Endothelial cell of umbilical vein (primary cell): ENCODE measurements at regions of chr6 and their contacts with region 1.

Region 1: GRCh38 chr6:31158140-31158862 is at the start of gene TCF19:
- DNase-seq: peak; percentile 100
- H3K4me3 ChIP-seq: peak within 1 kb of the TSS; percentile 72 to 90 (median 90)
- H3K27ac ChIP-seq: peak within 1 kb of the TSS; percentile 30
- H3K4me1 ChIP-seq: peaks cover 12% of the 10 kb centered on the region
- H3K27me3 ChIP-seq: no peaks in the 10 kb centered on the region
- CTCF ChIP-seq: no peak
- POLR2A ChIP-seq: peak; percentile 3
- total RNA-seq, gene TCF19: 28.0 and 31.7 TPM in 2 replicates

Region 2: GRCh38 chr6:31122791-31123706 is 35.3 kb before region 1 on chr6:
- CTCF ChIA-PET with region 1: interaction called, 3 read pairs
- POLR2A ChIA-PET with region 1: no interaction called
- dilution Hi-C with region 1: no loop called
- intact Hi-C with region 1: loop called (anchors 1 kb)
- DNase-seq: peak; percentile 91
- H3K4me3 ChIP-seq: no peak overlapping the region
- H3K27ac ChIP-seq: peak overlapping the region; percentile 90
- H3K4me1 ChIP-seq: peaks cover 36% of the 10 kb centered on the region
- H3K27me3 ChIP-seq: no peaks in the 10 kb centered on the region
- CTCF ChIP-seq: no peak
- POLR2A ChIP-seq: no peak

Region 3: DNA sequence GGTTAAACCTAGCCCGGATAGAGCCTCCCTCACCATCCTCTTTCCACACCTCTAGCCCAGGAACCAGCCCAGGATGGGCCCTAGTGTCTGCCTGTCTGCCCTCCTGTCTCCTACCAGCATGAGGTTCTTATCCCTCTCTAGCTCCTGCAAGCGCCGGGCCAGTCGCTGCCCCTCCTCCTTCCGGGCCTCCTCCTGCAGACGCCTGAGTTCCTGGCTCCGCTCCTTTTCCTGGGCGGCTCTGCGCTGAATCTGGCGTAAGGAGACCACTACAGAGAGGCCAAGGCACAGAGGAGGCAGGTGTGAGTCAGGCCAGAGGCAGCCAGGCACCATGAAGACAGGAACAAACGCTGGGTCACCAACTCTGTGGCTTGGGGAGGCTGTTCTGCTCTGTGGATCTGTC is 15.2 kb before region 1 on chr6:
- CTCF ChIA-PET with region 1: interaction called, 16 read pairs
- POLR2A ChIA-PET with region 1: interaction called, 3 read pairs
- dilution Hi-C with region 1: no loop called
- intact Hi-C with region 1: no loop called
- DNase-seq: no peak
- H3K4me3 ChIP-seq: no peak overlapping the region
- H3K27ac ChIP-seq: no peak overlapping the region
- H3K4me1 ChIP-seq: peaks cover 8% of the 10 kb centered on the region
- H3K27me3 ChIP-seq: no peaks in the 10 kb centered on the region
- CTCF ChIP-seq: no peak
- POLR2A ChIP-seq: no peak

Region 4: GRCh38 chr6:31180502-31180901 is 22.2 kb after region 1 on chr6:
- CTCF ChIA-PET with region 1: interaction called, 3 read pairs
- POLR2A ChIA-PET with region 1: no interaction called
- dilution Hi-C with region 1: no loop called
- intact Hi-C with region 1: loop called (anchors 1 kb)
- DNase-seq: peak; percentile 89
- H3K4me3 ChIP-seq: peak overlapping the region in 2 of 3 experiments; percentile 12 to 53
- H3K27ac ChIP-seq: no peak overlapping the region
- H3K4me1 ChIP-seq: peaks cover 6% of the 10 kb centered on the region
- H3K27me3 ChIP-seq: no peaks in the 10 kb centered on the region
- CTCF ChIP-seq: no peak
- POLR2A ChIP-seq: no peak